GM18951 (cell line): ENCODE measurements at regions of chr6 and their contacts with region 1.

Region 1: GRCh38 chr6:165884813-165885765 is 222.0 kb upstream of the PDE10A start:
- POLR2A ChIP-seq: no peak

Region 2: GRCh38 chr6:165641672-165642156 is 243.4 kb before region 1 on chr6:
- in situ Hi-C with region 1: no loop called
- POLR2A ChIP-seq: no peak

Region 3: DNA sequence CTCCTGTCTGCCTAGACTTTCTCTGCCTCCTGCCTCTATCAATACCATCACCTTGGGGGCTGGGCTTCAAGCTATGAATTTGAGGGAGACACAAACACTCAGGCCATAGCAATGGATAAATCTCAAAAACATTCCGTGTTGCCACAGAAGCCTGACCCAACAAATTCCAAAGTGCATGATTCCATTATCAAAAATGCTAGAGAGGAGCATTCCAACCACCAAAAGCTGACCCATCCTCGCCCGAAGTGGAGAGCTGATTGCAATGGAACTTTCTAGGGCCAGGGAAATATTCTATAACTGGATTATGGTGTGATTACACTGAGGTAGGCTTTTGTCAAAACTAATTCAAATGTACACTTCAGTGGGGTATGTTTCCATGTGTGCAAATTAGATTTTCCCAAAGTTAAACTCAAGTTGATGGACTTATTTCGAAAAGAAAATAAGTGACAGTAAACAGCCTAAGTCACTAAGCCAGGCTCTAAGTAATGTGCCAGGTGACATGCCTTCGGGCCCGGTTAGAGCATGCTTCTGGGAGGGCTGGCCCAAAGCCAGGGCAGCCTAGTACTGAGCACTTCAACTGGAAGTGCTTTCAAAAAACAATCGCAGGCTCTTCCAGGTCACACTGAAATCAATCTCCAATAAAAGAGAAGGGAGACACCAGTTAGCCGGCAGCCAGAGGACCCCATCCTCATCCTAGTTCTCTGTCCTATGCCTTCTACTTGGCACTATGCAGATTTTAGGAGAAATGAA is 140.2 kb after region 1 on chr6:
- in situ Hi-C with region 1: no loop called
- POLR2A ChIP-seq: no peak

Region 4: GRCh38 chr6:166097915-166098522 is 212.9 kb after region 1 on chr6:
- in situ Hi-C with region 1: loop called (anchors 5 kb)
- POLR2A ChIP-seq: no peak

Region 5: GRCh38 chr6:166127624-166128472 is 242.8 kb after region 1 on chr6:
- in situ Hi-C with region 1: no loop called
- POLR2A ChIP-seq: no peak

Region 6: GRCh38 chr6:166435574-166435973 is 550.5 kb after region 1 on chr6:
- in situ Hi-C with region 1: loop called (anchors 25 kb)
- POLR2A ChIP-seq: no peak

Region 7: GRCh38 chr6:166925141-166925996 is 1040.3 kb after region 1 on chr6:
- in situ Hi-C with region 1: no loop called
- POLR2A ChIP-seq: no peak